Caco-2 (cell line): ENCODE measurements at regions of chr6 and their contacts with region 1.

Region 1: DNA sequence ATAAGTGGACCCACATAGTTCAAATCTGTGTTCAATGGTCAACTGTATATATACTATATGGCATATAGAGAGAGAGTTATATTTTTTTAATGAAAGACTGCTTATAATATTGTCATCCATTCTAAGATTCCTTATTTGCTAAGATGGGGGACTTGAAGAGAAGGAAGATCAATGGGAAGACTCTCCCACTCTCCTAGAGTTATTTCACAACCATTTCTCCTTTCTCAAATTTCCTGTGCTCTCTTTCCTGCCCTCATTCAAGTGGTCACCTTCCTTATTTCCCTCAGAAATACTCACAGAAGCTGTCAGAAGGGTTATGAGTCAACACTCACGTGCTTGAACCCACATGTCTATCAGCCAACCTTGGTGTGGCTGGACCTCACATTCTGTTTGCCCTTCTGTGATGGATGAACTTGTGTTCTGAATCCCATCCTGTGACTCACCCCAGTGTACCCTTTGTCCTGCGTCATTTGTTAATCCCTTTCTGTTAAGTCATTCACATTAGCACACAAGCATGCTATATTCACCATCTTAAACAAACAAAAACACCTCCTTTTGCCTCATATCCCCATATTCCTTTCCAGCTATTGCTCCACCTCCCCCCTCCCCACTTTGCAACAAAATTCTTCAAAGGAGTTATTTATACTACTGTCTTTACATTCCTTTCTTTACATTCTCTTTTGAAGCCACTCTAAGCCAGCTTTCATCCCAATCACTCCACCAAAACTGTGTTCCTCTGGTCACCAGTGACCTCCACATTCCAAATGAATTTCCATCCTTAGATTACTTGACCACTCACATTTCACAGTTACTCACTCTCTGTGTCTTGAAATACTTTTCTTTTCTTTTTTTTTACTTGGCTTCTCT is 279.3 kb upstream of the TCF21 start:
- DNase-seq: peak; percentile 79 to 84
- H3K4me3 ChIP-seq: no peak overlapping the region
- H3K4me3 Mint-ChIP-seq: no peak overlapping the region
- H3K27ac Mint-ChIP-seq: no peak overlapping the region
- H3K4me1 ChIP-seq: peaks cover 33% of the 10 kb centered on the region
- H3K4me1 Mint-ChIP-seq: no peaks in the 10 kb centered on the region
- H3K27me3 ChIP-seq: no peaks in the 10 kb centered on the region
- H3K27me3 Mint-ChIP-seq: no peaks in the 10 kb centered on the region
- CTCF ChIP-seq: no peak

Region 2: GRCh38 chr6:133070410-133071043 is 539.1 kb before region 1 on chr6:
- CTCF ChIA-PET with region 1: no interaction called
- POLR2A ChIA-PET with region 1: no interaction called
- intact Hi-C with region 1: no loop called
- DNase-seq: no peak
- H3K4me3 ChIP-seq: no peak overlapping the region
- H3K4me3 Mint-ChIP-seq: no peak overlapping the region
- H3K27ac Mint-ChIP-seq: no peak overlapping the region
- H3K4me1 ChIP-seq: no peaks in the 10 kb centered on the region
- H3K4me1 Mint-ChIP-seq: no peaks in the 10 kb centered on the region
- H3K27me3 ChIP-seq: no peaks in the 10 kb centered on the region
- H3K27me3 Mint-ChIP-seq: peaks cover 10% of the 10 kb centered on the region
- CTCF ChIP-seq: no peak

Region 3: DNA sequence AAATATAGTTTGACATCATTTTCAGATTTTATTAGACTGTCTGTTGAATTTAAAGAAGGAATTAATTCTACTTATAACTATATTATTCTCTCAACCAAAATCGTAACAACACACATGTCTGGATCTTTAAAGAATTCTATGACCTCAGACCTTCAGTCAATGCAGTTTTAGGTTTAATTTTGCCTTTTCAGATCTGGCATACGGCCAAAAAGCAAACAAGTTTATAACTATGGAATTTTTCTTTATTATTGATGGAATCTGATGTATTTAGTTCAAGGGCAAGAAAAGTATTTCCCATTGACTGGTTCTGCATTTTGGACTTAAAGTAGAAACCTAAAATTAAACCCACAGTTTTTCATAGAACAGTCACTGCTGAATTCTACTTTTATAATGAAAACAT is 135.1 kb before region 1 on chr6:
- CTCF ChIA-PET with region 1: no interaction called
- POLR2A ChIA-PET with region 1: no interaction called
- intact Hi-C with region 1: no loop called
- DNase-seq: no peak
- H3K4me3 ChIP-seq: no peak overlapping the region
- H3K4me3 Mint-ChIP-seq: no peak overlapping the region
- H3K27ac Mint-ChIP-seq: no peak overlapping the region
- H3K4me1 ChIP-seq: no peaks in the 10 kb centered on the region
- H3K4me1 Mint-ChIP-seq: no peaks in the 10 kb centered on the region
- H3K27me3 ChIP-seq: no peaks in the 10 kb centered on the region
- H3K27me3 Mint-ChIP-seq: no peaks in the 10 kb centered on the region
- CTCF ChIP-seq: no peak

Region 4: GRCh38 chr6:133584823-133585222 is 24.8 kb before region 1 on chr6:
- CTCF ChIA-PET with region 1: no interaction called
- POLR2A ChIA-PET with region 1: no interaction called
- intact Hi-C with region 1: loop called (anchors 1 kb)
- DNase-seq: no peak
- H3K4me3 ChIP-seq: no peak overlapping the region
- H3K4me3 Mint-ChIP-seq: no peak overlapping the region
- H3K27ac Mint-ChIP-seq: no peak overlapping the region
- H3K4me1 ChIP-seq: peaks cover 12% of the 10 kb centered on the region
- H3K4me1 Mint-ChIP-seq: peaks cover 15% of the 10 kb centered on the region
- H3K27me3 ChIP-seq: no peaks in the 10 kb centered on the region
- H3K27me3 Mint-ChIP-seq: no peaks in the 10 kb centered on the region
- CTCF ChIP-seq: no peak

Region 5: GRCh38 chr6:133590814-133591213 is 18.8 kb before region 1 on chr6:
- CTCF ChIA-PET with region 1: no interaction called
- POLR2A ChIA-PET with region 1: no interaction called
- intact Hi-C with region 1: loop called (anchors 1 kb)
- DNase-seq: no peak
- H3K4me3 ChIP-seq: no peak overlapping the region
- H3K4me3 Mint-ChIP-seq: no peak overlapping the region
- H3K27ac Mint-ChIP-seq: no peak overlapping the region
- H3K4me1 ChIP-seq: peaks cover 21% of the 10 kb centered on the region
- H3K4me1 Mint-ChIP-seq: peaks cover 16% of the 10 kb centered on the region
- H3K27me3 ChIP-seq: no peaks in the 10 kb centered on the region
- H3K27me3 Mint-ChIP-seq: no peaks in the 10 kb centered on the region
- CTCF ChIP-seq: no peak

Region 6: GRCh38 chr6:133631421-133631820 is 21.8 kb after region 1 on chr6:
- CTCF ChIA-PET with region 1: no interaction called
- POLR2A ChIA-PET with region 1: no interaction called
- intact Hi-C with region 1: loop called (anchors 1 kb)
- DNase-seq: peak in 1 of 2 experiments; percentile 22
- H3K4me3 ChIP-seq: no peak overlapping the region
- H3K4me3 Mint-ChIP-seq: no peak overlapping the region
- H3K27ac Mint-ChIP-seq: no peak overlapping the region
- H3K4me1 ChIP-seq: peaks cover 18% of the 10 kb centered on the region
- H3K4me1 Mint-ChIP-seq: no peaks in the 10 kb centered on the region
- H3K27me3 ChIP-seq: no peaks in the 10 kb centered on the region
- H3K27me3 Mint-ChIP-seq: no peaks in the 10 kb centered on the region
- CTCF ChIP-seq: no peak